ENCODE measurements at regions of chr21 and their contacts with region 1.

Region 1: DNA sequence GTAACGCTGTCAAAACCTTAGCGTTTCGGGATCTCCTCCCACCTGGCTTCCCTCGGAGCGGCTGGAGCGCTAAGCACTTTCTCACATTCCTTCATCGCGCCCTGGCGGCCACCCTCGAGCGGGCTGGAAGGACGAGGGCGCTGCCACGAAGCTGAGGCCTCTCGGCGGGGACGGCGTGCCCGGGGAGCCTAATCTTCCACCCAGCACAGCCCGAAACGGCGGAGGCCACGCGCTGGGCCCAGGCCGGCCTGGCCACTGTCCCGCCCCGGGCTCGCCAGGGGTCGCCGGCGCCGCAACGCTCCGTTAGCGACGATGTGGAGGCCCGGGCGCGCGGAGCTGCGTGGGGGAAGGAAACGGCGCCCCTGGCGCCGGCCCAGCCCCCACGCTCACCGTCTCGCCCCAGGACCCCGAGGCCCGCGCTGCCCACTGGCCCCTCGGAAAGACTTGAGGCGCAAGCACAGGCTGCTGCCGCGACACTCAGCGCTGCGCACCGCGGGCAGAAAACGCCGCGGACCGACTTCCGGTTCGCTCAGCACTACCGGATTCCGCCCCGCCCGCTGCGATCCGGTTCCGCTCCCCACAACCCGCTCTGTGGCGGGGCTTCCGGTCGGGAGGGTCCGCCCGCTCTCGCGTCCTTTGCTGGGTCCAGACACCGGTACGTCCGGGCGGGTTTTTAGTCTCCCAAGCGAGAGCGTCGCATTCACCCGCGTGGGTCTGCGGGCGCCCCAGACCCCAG is at the start of gene YBEY:
- DNase-seq: peak; percentile 80 to 84 (median 81)
- H3K4me3 ChIP-seq: peak within 1 kb of the TSS; percentile 71 to 78
- H3K4me3 Mint-ChIP-seq: peak within 1 kb of the TSS; percentile 95 to 100 (median 98)
- H3K27ac ChIP-seq: peak within 1 kb of the TSS; percentile 69
- H3K27ac Mint-ChIP-seq: peak within 1 kb of the TSS; percentile 87 to 99 (median 98)
- H3K4me1 ChIP-seq: peaks cover 50% of the 10 kb centered on the region
- H3K4me1 Mint-ChIP-seq: peaks cover 31 to 75% (median 52%) of the 10 kb centered on the region in 4 donors
- H3K27me3 ChIP-seq: no peaks in the 10 kb centered on the region
- H3K27me3 Mint-ChIP-seq: peaks cover 0 to 2% of the 10 kb centered on the region in 2 donors
- total RNA-seq, gene YBEY: 11.5 to 14.7 TPM

Region 2: DNA sequence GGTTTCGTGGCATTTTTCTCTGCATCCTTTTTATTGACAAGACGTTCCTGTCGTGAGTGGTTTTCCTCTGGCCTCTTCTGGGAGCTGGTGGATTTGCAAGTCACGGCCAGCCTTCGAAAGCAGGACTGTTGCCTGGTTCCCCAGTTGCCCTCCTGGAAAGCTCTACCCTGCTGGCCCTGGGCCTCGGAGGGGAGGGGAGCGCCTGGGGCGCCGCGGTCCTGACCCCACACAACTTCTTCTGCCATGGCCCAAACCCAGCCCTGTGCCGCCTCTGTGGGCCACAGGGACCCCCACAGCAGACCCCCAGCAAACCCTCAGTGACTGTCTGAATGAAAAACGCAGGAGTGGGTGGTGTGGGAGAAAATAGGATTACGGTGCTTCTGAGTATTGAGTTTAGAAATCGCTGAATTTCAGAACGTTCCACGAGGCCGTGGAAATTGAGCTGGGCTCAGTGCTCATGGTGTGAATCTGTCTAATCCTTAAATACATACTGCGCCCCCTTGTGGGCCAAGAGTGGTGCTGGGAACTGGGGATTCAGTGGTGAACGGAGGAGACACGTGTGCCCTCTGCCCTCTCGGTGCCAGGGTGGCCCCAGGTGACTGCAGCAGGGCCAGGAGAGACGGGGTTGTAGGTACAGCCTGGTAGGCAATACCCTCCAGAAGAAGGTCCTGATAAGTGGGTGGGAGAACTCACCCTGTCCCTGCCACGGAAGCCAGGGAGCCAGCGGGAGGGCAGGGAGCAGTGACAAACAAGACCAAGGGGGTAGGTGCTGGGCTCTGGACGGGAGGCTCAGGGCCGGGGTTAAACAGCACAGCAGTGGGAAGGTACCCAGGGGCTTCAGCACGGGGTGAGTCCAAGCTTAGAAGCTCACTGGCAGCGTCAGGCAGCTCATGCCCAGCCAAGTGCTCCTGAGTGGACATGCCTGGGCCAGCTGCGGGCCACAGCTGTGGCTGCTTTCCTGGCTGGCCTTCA is 405.5 kb before region 1 on chr21:
- CTCF ChIA-PET with region 1: no interaction called
- POLR2A ChIA-PET with region 1: no interaction called
- intact Hi-C with region 1: no loop called
- DNase-seq: peak; percentile 53 to 77 (median 67)
- H3K4me3 ChIP-seq: no peak overlapping the region
- H3K4me3 Mint-ChIP-seq: peak overlapping the region in 7 of 8 donors; percentile 12 to 82 (median 53)
- H3K27ac ChIP-seq: no peak overlapping the region
- H3K27ac Mint-ChIP-seq: peak overlapping the region in 4 of 7 donors; percentile 27 to 47 (median 39)
- H3K4me1 ChIP-seq: peaks cover 38% of the 10 kb centered on the region
- H3K4me1 Mint-ChIP-seq: peaks cover 37 to 65% (median 47%) of the 10 kb centered on the region in 4 donors
- H3K27me3 ChIP-seq: no peaks in the 10 kb centered on the region
- H3K27me3 Mint-ChIP-seq: no peaks in the 10 kb centered on the region

Region 3: DNA sequence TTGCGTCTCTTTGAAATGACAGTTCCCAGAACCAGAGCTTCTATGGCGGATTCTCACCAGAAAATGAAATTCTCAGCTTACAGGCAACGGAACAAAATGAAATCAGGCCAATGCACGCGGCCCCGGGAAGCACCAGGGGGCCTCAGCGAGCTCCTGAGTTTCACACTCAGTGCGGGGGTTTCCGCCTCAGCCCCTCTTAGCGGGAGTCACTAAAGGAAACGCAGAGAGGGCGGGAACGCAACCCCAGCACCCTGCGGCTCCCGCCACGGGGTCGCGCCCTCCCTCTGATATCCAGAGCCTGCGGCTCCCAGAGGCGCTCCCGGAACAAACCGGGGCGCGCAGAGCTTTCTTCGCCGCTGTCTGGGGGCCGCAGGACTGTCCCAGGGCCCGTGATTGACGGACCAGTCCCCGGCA is 312.3 kb before region 1 on chr21:
- CTCF ChIA-PET with region 1: no interaction called
- POLR2A ChIA-PET with region 1: no interaction called
- intact Hi-C with region 1: loop called (anchors 10 kb)
- DNase-seq: peak; percentile 64 to 81 (median 73)
- H3K4me3 ChIP-seq: peak overlapping the region; percentile 52 to 63
- H3K4me3 Mint-ChIP-seq: peak overlapping the region; percentile 87 to 96 (median 90)
- H3K27ac ChIP-seq: no peak overlapping the region
- H3K27ac Mint-ChIP-seq: peak overlapping the region; percentile 53 to 84 (median 68)
- H3K4me1 ChIP-seq: peaks cover 39% of the 10 kb centered on the region
- H3K4me1 Mint-ChIP-seq: peaks cover 3 to 30% (median 7%) of the 10 kb centered on the region in 4 donors
- H3K27me3 ChIP-seq: peaks cover 35% of the 10 kb centered on the region
- H3K27me3 Mint-ChIP-seq: peaks cover 9 to 22% of the 10 kb centered on the region in 2 donors

Region 4: DNA sequence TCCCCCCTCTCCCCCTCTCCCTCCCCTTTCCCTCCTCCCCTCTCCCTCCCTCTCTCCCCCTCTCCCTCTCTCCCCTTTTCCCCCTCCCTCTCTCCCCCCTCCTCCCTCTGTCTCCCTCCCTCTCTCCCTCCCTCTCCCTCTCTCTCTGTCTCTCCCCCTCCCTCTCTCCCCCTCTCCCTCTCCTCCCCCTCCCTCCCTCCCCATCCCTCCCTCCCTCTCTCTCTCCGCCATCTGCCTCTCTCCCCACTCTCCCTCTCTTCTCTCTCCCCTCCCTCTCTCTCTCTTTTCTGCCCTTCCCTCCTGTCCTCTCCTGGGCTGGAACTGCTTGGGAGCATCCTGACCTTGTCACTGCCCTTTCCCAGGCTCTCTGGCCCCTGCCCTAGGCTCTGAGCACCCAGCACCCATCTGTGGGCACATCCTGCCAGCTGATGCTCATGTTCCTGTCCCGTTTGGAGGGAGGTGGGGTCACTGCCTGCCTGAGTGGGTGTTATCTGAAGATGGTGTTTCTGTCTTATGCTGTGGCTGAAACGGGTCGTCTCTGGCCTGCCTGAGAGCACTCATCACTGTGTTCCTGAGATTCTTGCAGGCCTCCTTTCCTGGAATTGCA is 141.4 kb before region 1 on chr21:
- CTCF ChIA-PET with region 1: interaction called, 19 read pairs
- POLR2A ChIA-PET with region 1: interaction called, 4 read pairs
- intact Hi-C with region 1: loop called (anchors 1 kb)
- DNase-seq: no peak
- H3K4me3 ChIP-seq: no peak overlapping the region
- H3K4me3 Mint-ChIP-seq: peak overlapping the region in 3 of 8 donors; percentile 15 to 49 (median 38)
- H3K27ac ChIP-seq: no peak overlapping the region
- H3K27ac Mint-ChIP-seq: peak overlapping the region in 4 of 7 donors; percentile 2 to 85 (median 60)
- H3K4me1 ChIP-seq: peaks cover 5% of the 10 kb centered on the region
- H3K4me1 Mint-ChIP-seq: peaks cover 4 to 8% (median 5%) of the 10 kb centered on the region in 4 donors
- H3K27me3 ChIP-seq: no peaks in the 10 kb centered on the region
- H3K27me3 Mint-ChIP-seq: no peaks in the 10 kb centered on the region

Region 5: DNA sequence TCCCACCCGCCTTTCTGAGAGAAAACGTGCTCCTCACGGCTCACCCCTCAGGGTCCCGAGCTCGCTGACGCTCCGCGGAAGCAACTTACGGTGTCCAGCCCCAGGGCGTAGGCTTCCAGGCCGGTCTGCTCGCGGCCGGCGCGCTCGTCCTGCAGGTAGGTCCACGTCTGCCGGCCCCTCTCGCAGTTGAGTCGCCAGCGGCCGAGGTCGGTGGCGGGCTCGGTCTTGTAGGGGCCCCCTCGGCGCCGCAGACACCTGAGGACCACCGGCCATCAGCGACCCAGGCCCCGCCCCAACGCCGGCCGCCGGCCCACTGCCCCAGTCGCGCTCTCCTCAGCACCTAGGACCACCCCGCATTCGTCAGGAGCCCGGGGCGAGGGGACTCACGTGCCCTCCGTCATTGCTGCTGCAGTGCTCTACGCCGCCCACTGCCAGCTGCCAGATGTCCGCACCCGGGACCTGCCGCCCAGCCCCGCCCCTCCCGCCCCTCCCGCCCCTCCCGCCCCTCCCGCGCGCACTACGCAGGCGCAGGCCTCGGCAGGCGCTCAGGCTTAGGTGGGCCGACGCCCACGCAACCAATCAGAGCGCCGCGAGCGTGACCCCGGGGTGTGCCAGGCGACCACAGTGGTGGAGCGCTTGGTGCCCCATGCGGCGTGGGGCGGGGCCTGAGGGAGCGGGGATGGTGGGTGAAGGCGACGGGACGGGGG is 57.4 kb before region 1 on chr21 and contains the start of gene LSS:
- CTCF ChIA-PET with region 1: interaction called, 3 read pairs
- POLR2A ChIA-PET with region 1: no interaction called
- intact Hi-C with region 1: loop called (anchors 5 kb)
- DNase-seq: peak; percentile 96 to 98 (median 98)
- H3K4me3 ChIP-seq: peak within 1 kb of the TSS; percentile 65 to 72
- H3K4me3 Mint-ChIP-seq: peak within 1 kb of the TSS; percentile 91 to 98 (median 96)
- H3K27ac ChIP-seq: peak within 1 kb of the TSS; percentile 76
- H3K27ac Mint-ChIP-seq: peak within 1 kb of the TSS; percentile 61 to 99 (median 97)
- H3K4me1 ChIP-seq: peaks cover 28% of the 10 kb centered on the region
- H3K4me1 Mint-ChIP-seq: peaks cover 30 to 56% (median 44%) of the 10 kb centered on the region in 4 donors
- H3K27me3 ChIP-seq: no peaks in the 10 kb centered on the region
- H3K27me3 Mint-ChIP-seq: no peaks in the 10 kb centered on the region
- total RNA-seq, gene LSS: 53.2 to 54.5 TPM

Region 6: GRCh38 chr21:46295996-46296752 is 10.2 kb after region 1 on chr21:
- CTCF ChIA-PET with region 1: interaction called, 4 read pairs
- POLR2A ChIA-PET with region 1: interaction called, 9 read pairs
- intact Hi-C with region 1: loop called (anchors 1 kb)
- DNase-seq: peak; percentile 33 to 71 (median 55)
- H3K4me3 ChIP-seq: no peak overlapping the region
- H3K4me3 Mint-ChIP-seq: peak overlapping the region in 7 of 8 donors; percentile 28 to 79 (median 76)
- H3K27ac ChIP-seq: peak overlapping the region; percentile 41
- H3K27ac Mint-ChIP-seq: peak overlapping the region in 5 of 7 donors; percentile 57 to 96 (median 77)
- H3K4me1 ChIP-seq: peaks cover 6% of the 10 kb centered on the region
- H3K4me1 Mint-ChIP-seq: peaks cover 6 to 16% (median 10%) of the 10 kb centered on the region in 4 donors
- H3K27me3 ChIP-seq: no peaks in the 10 kb centered on the region
- H3K27me3 Mint-ChIP-seq: no peaks in the 10 kb centered on the region

Region 7: DNA sequence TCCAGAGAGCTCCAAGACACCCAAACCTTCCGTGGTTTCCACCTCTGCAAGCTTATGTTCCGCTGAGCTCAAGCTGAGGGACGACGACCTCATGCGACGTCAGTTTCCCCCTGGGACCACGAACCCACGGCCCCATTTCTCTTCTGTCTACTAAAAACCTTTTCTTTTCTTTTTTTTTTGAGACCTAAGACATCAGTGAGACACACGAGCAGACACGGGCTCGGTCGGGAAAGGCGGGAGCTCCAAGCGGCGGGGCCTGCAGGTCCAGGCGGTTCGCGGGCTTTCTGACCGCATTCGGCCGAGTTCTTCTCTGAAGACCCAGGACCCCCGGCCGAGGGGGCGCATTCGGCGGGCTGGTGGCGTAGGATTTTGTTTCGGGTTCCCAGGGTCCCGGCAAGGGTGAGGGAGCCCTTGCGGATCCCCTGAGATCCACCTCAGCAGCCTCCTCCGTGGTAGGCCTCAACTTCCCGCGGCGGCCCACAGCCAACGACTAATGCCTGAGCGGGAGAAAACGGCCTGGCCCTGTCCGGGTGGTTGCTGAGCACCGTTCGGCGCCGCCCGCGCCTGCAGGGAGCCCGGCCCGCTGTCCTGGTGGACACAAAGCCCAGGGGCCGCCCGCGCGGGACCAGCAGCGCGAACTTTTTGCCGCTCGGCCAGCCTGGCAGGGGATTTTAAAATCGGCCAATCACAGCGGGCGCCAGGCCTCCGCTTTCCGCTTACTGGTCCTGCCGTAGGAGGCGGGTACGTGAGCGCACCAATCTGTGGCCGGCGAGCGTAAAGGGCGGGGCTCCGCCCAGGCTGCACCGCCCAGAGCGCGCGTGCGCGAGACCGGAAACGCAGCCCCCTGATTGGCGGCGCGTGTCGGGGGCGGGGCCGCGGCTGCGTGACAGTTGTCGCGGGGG is 37.5 kb after region 1 on chr21 and contains the start of gene C21orf58:
- CTCF ChIA-PET with region 1: interaction called, 4 read pairs
- POLR2A ChIA-PET with region 1: interaction called, 16 read pairs
- intact Hi-C with region 1: loop called (anchors 1 kb)
- DNase-seq: peak; percentile 97 to 99 (median 99)
- H3K4me3 ChIP-seq: peak within 1 kb of the TSS; percentile 73 to 93
- H3K4me3 Mint-ChIP-seq: peak within 1 kb of the TSS; percentile 94 to 98 (median 96)
- H3K27ac ChIP-seq: peak within 1 kb of the TSS; percentile 94
- H3K27ac Mint-ChIP-seq: peak within 1 kb of the TSS; percentile 91 to 99 (median 99)
- H3K4me1 ChIP-seq: peaks cover 28% of the 10 kb centered on the region
- H3K4me1 Mint-ChIP-seq: peaks cover 15 to 44% (median 28%) of the 10 kb centered on the region in 4 donors
- H3K27me3 ChIP-seq: no peaks in the 10 kb centered on the region
- H3K27me3 Mint-ChIP-seq: no peaks in the 10 kb centered on the region
- total RNA-seq, gene C21orf58: 8.2 to 9.4 TPM

Measured in CD4-positive, alpha-beta memory T cell (primary cell).